Gastrocnemius medialis (tissue), 4 donors: ENCODE measurements at regions of chr2 and their contacts with region 1.

Region 1: GRCh38 chr2:54106631-54107454 is 8.6 kb upstream of the ACYP2 start:
- DNase-seq: peak in 1 of 2 donors; percentile 34
- ATAC-seq: peak; percentile 80 to 89
- H3K4me3 ChIP-seq: peak overlapping the region in 2 of 4 donors; percentile 2 to 29
- H3K27ac ChIP-seq: no peak overlapping the region
- H3K4me1 ChIP-seq: peaks cover 10 to 18% of the 10 kb centered on the region in 2 donors
- H3K27me3 ChIP-seq: no peaks in the 10 kb centered on the region
- CTCF ChIP-seq: peak; percentile 40 to 75 (median 65)
- POLR2A ChIP-seq: no peak

Region 2: DNA sequence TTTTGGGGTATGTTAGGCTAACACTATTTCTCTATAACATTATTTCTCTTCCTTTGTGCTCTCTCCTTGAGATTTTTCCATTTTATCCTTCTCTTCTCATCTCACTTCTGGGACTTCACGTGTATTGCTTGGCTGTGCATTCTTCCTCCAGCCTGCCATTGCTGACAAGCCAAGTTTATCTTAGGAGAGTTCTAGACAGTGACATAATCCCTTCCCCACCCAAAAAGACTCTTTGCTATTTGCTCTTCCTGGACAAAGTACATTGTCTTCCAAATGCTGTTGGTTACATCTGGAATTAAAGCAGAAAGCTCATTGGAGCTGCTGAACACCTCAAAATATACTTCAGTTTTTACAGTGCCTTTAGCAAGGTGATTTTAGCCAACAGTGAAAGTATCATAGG is 140.3 kb after region 1 on chr2:
- in situ Hi-C with region 1: no loop called
- intact Hi-C with region 1: no loop called
- DNase-seq: no peak
- ATAC-seq: no peak
- H3K4me3 ChIP-seq: no peak overlapping the region
- H3K27ac ChIP-seq: no peak overlapping the region
- H3K4me1 ChIP-seq: peaks cover 0 to 6% of the 10 kb centered on the region in 2 donors
- H3K27me3 ChIP-seq: no peaks in the 10 kb centered on the region
- CTCF ChIP-seq: no peak
- POLR2A ChIP-seq: no peak

Region 3: DNA sequence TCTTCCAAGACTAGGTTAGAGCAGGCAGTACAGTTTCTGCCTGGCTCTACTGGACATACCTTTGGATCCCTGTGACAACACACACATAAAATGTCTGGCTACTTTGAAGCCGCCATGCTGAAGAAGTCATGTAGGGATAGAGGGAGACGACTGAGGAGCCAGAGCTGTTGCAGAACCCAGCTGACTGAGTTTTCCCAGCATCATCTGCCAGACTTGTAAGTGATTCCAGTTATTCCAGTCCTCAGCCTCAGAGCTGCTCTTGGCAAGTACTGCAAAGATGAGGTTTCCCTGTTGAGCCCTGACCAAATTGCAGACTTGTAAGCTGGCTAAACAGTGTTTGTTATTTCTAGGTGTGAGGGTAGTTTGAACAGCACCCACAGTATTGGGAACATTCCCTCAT is 180.7 kb after region 1 on chr2:
- in situ Hi-C with region 1: no loop called
- intact Hi-C with region 1: no loop called
- DNase-seq: peak in 1 of 2 donors; percentile 18
- ATAC-seq: peak; percentile 65
- H3K4me3 ChIP-seq: no peak overlapping the region
- H3K27ac ChIP-seq: peak overlapping the region in 2 of 4 donors; percentile 14 to 15
- H3K4me1 ChIP-seq: peaks cover 15 to 17% of the 10 kb centered on the region in 2 donors
- H3K27me3 ChIP-seq: no peaks in the 10 kb centered on the region
- CTCF ChIP-seq: no peak
- POLR2A ChIP-seq: no peak

Region 4: DNA sequence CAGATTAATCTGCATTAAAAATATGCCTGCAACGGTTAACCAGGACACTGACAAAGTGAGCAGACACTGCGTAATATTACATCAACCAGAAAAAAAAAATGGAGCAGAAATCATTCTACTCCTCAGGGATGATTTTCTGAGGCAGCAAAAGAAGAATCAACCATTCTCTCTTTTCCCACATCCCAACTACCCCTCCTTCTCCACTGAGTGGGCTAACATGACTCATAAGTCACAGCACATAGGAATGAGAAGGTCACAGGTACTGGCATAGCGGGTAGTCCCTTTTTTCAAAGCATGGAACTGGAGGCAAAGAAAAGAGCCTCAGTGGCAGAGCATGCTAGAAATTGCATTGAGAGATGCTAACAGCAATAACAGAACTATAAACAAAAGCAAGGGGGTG is 203.5 kb after region 1 on chr2:
- in situ Hi-C with region 1: no loop called
- intact Hi-C with region 1: no loop called
- DNase-seq: no peak
- ATAC-seq: no peak
- H3K4me3 ChIP-seq: no peak overlapping the region
- H3K27ac ChIP-seq: no peak overlapping the region
- H3K4me1 ChIP-seq: no peaks in the 10 kb centered on the region
- H3K27me3 ChIP-seq: no peaks in the 10 kb centered on the region
- CTCF ChIP-seq: no peak
- POLR2A ChIP-seq: no peak

Region 5: DNA sequence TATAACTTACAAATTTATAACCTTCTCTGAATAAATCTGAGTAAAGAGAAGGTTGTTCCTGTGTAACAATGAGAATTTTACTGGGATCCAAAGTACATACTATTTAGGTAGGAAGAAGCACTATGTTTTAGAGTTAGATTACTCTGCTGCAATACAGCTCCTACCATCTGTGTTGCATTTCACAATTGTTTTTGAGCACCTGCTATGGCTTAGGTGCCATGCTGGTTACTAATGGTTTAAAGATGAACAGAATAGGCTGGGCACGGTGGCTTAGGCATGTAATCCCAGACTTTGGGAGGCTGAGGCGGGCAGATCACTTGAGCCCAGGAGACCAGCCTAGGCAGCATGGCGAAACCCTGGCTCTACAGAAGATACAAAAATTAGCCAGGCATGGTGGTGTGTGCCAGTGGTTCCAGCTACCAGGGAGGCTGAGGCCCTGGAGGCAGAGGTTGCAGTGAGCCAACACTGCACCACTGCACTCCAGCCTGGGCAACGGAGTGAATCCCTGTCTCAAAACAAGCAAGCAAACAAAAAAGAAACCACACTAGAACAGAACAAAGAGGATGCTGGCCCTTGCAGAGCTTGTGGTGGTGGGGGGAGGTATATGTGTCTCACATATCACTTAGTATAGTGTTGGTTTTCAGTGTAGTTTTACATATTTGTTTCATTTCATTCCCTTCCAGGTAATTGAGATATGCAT is 406.0 kb after region 1 on chr2:
- in situ Hi-C with region 1: loop called in 1 of 4 experiments (anchors 25 kb)
- intact Hi-C with region 1: loop called (anchors 10 kb)
- DNase-seq: peak; percentile 23 to 47
- ATAC-seq: peak; percentile 92 to 93
- H3K4me3 ChIP-seq: no peak overlapping the region
- H3K27ac ChIP-seq: peak overlapping the region in 2 of 4 donors; percentile 2 to 54
- H3K4me1 ChIP-seq: peaks cover 6 to 54% of the 10 kb centered on the region in 2 donors
- H3K27me3 ChIP-seq: no peaks in the 10 kb centered on the region
- CTCF ChIP-seq: no peak
- POLR2A ChIP-seq: no peak